ENCODE measurements at regions of chr1 and their contacts with region 1.

Region 1: DNA sequence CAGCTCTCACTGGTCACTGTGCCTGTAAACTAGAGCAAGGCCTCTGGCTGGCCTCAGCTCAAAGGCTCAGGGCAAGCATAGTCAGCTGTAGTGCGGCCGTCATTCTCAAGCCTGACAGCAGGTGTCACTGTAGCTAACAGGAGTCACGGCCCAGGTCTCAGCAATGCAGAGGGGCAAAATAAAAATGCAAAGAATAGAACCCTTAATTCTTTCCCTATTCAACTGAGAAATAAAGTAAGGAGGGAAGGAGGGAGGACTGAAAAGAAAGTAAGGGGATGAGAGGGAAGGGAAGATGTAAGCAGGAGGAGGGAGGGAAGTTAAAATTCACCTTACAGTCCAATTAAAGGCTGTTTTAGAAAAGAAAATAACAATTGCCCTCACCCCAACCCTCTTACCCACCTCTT is 106.1 kb downstream of the KIAA0319L start:
- DNase-seq: peak; percentile 73
- H3K4me3 ChIP-seq: no peak overlapping the region
- H3K27ac ChIP-seq: no peak overlapping the region
- H3K4me1 ChIP-seq: peaks cover 9% of the 10 kb centered on the region
- H3K27me3 ChIP-seq: no peaks in the 10 kb centered on the region
- CTCF ChIP-seq: peak; percentile 46 to 89 (median 80)
- POLR2A ChIP-seq: no peak

Region 2: GRCh38 chr1:35202048-35202719 is 248.9 kb before region 1 on chr1:
- intact Hi-C with region 1: loop called (anchors 10 kb)
- DNase-seq: peak; percentile 63
- H3K4me3 ChIP-seq: no peak overlapping the region
- H3K27ac ChIP-seq: no peak overlapping the region
- H3K4me1 ChIP-seq: no peaks in the 10 kb centered on the region
- H3K27me3 ChIP-seq: no peaks in the 10 kb centered on the region
- CTCF ChIP-seq: peak; percentile 60 to 84 (median 74)
- POLR2A ChIP-seq: no peak

Region 3: DNA sequence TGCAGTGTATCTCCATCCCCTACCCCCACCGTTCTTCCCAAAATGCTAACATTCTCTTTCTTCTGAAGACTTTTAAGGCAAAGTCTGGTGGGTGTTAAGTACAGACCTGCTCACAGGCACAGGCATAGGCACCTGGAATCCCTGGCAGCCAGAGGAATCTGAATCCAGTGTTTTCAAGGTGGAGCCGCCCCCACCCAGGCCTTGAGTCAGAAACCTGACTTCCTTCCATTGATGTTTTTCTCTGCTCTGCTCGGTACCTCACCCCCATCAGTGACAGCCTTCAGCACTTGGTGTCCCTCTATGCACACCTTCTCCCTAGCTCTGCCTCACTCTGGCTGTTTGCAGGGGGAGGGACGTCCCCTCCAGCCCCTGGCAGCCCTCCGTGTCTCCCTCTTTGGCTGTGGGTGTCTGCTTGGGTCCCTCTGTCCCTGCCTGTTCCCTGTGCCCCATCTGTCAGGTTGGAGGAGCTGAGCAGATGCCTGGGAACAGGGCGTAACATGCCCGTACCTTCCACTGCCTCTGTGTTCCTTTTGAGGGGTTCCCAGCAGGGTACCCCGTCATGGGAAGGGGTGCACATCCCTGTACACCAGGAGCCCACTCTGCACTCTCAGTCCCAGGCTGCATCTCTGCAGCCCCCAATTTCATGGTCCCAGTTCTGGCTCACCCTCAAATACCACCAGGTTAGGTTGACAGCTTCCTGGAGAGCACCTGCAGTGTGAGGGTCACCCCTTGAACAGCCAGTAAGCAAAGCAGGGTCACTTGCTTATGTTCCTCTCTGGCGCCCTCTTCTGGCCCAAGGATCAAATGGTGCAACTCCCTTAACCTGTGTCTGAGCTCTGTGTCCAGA is 113.1 kb after region 1 on chr1:
- intact Hi-C with region 1: loop called (anchors 2 kb)
- DNase-seq: peak; percentile 71
- H3K4me3 ChIP-seq: no peak overlapping the region
- H3K27ac ChIP-seq: no peak overlapping the region
- H3K4me1 ChIP-seq: peaks cover 7% of the 10 kb centered on the region
- H3K27me3 ChIP-seq: no peaks in the 10 kb centered on the region
- CTCF ChIP-seq: peak; percentile 59 to 76 (median 76)
- POLR2A ChIP-seq: no peak

Region 4: GRCh38 chr1:35592991-35593694 is 142.0 kb after region 1 on chr1:
- intact Hi-C with region 1: no loop called
- DNase-seq: no peak
- H3K4me3 ChIP-seq: no peak overlapping the region
- H3K27ac ChIP-seq: no peak overlapping the region
- H3K4me1 ChIP-seq: no peaks in the 10 kb centered on the region
- H3K27me3 ChIP-seq: no peaks in the 10 kb centered on the region
- CTCF ChIP-seq: no peak
- POLR2A ChIP-seq: no peak

Region 5: GRCh38 chr1:35715568-35716002 is 264.5 kb after region 1 on chr1:
- intact Hi-C with region 1: loop called (anchors 5 kb)
- DNase-seq: peak; percentile 60
- H3K4me3 ChIP-seq: no peak overlapping the region
- H3K27ac ChIP-seq: no peak overlapping the region
- H3K4me1 ChIP-seq: peaks cover 3% of the 10 kb centered on the region
- H3K27me3 ChIP-seq: no peaks in the 10 kb centered on the region
- CTCF ChIP-seq: peak; percentile 62 to 74 (median 68)
- POLR2A ChIP-seq: no peak

Region 6: GRCh38 chr1:35845766-35846165 is 394.6 kb after region 1 on chr1:
- intact Hi-C with region 1: no loop called
- DNase-seq: no peak
- H3K4me3 ChIP-seq: no peak overlapping the region
- H3K27ac ChIP-seq: no peak overlapping the region
- H3K4me1 ChIP-seq: no peaks in the 10 kb centered on the region
- H3K27me3 ChIP-seq: no peaks in the 10 kb centered on the region
- CTCF ChIP-seq: no peak
- POLR2A ChIP-seq: no peak

Measured in prostate gland (tissue), 2 donors.